CD14-positive monocyte (primary cell): ENCODE measurements at regions of chr10 and their contacts with region 1.

Region 1: DNA sequence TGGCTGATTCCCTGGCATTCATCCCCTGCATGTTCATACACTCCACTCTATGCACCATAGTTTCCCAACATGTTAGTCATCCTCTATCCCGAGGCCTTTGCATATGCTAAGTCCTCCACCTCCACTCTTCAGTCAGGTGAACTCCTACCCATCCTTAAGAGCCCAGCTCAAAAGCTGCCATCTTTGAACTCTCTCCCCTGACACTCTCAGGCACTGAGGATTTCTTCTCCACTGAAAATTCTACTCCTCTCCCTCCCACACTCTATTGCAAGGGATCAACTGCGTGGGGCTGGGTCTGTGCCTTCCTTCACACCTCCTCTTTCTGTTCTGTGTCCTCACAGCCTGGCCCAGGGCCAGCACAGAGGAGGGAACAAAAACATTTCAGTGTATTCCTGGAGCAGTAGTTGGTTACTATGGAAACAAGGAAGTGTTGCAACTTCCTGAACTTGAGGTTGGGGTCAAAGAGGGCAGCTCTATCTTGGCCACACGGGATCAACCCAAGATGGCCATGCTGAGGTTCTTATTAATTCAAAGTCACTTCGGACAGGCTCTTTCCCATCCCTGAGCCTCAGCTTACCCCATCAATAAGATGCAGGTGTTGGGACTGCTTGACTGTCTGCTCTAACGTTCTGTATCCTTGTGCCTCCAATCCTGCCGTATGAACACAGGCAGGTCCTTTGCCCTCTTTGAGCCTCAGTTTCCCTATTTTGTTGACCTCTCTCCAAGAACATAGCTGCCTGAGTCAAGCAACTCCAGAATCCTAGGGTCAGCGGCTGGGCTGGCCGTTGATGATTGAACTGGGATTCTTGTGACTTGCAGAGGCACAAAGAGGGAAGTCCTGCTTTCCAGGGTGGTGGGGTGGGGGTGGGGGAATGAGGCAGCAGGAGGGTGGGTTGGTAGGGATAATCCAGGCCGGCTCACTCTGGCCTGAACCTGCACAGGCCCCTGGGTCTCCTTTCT is 15.5 kb downstream of the ZMIZ1 start:
- DNase-seq: peak; percentile 98 to 99 (median 98)
- H3K4me3 ChIP-seq: peak overlapping the region; percentile 17 to 60 (median 28)
- H3K4me3 Mint-ChIP-seq: peak overlapping the region; percentile 84 to 98
- H3K27ac ChIP-seq: peak overlapping the region; percentile 88 to 96
- H3K27ac Mint-ChIP-seq: peak overlapping the region; percentile 97 to 100 (median 100)
- H3K4me1 ChIP-seq: peaks cover 85 to 91% of the 10 kb centered on the region in 2 donors
- H3K4me1 Mint-ChIP-seq: peaks cover 93% of the 10 kb centered on the region
- H3K27me3 ChIP-seq: no peaks in the 10 kb centered on the region
- H3K27me3 Mint-ChIP-seq: peaks cover 0 to 8% (median 2%) of the 10 kb centered on the region in 3 donors
- CTCF ChIP-seq: no peak

Region 2: DNA sequence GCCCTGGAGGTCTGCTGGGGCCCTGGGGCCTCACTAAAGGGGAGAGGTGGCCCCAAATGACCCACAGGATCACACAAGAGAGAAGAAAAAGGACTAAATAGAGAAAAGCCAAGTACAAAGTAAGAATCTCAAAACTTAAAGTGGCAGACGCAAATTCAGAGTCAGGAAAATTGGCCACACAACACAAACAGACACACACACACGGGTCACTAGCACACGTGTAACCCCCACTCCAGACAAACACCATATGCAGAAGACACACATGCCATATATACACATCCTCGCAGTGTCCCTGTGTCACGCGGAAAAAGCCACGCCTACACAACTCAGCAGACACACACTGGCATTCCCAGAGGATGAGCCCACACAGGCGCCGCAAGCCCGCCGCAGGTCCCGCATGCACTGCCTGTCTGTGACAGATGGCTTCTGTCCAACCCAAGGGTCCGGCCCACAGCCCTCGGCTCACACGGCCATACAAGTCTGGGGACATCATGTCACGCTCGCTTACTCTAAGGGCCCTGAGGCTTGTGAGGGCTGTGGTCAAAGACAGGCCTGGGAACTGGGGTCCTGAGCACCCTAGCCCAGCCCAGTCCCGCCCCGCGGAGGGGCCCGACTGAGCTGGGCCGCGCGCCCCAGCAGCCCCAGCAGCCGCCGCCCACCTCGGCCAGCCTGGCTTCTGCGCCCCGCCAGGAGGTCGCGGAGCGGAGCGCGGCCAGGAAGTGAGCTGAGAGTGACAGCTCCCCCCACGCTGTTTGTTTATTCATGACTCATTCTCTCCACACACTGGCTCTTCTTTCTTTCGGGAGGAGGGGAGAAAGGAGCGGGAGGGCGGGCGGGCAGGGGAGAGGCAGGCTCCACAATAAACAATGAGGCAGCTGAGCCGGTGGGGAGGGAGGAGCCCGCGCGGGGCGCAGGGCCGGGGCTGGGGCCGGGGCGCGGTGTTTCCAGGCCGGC is 111.1 kb before region 1 on chr10:
- intact Hi-C with region 1: loop called (anchors 5 to 10 kb)
- DNase-seq: peak; percentile 87 to 90 (median 89)
- H3K4me3 ChIP-seq: peak overlapping the region; percentile 32 to 73 (median 42)
- H3K4me3 Mint-ChIP-seq: peak overlapping the region; percentile 67 to 70
- H3K27ac ChIP-seq: peak overlapping the region; percentile 27 to 92
- H3K27ac Mint-ChIP-seq: peak overlapping the region in 6 of 7 donors; percentile 61 to 99 (median 82)
- H3K4me1 ChIP-seq: peaks cover 27 to 33% of the 10 kb centered on the region in 2 donors
- H3K4me1 Mint-ChIP-seq: peaks cover 42% of the 10 kb centered on the region
- H3K27me3 ChIP-seq: no peaks in the 10 kb centered on the region
- H3K27me3 Mint-ChIP-seq: peaks cover 5 to 21% (median 6%) of the 10 kb centered on the region in 3 donors
- CTCF ChIP-seq: no peak

Region 3: GRCh38 chr10:79073784-79074432 is 10.4 kb before region 1 on chr10:
- intact Hi-C with region 1: loop called in 1 of 2 experiments (anchors 2 kb)
- DNase-seq: no peak
- H3K4me3 ChIP-seq: peak overlapping the region in 1 of 3 experiments; percentile 99
- H3K4me3 Mint-ChIP-seq: peak overlapping the region; percentile 48 to 56
- H3K27ac ChIP-seq: no peak overlapping the region
- H3K27ac Mint-ChIP-seq: peak overlapping the region in 5 of 7 donors; percentile 9 to 82 (median 37)
- H3K4me1 ChIP-seq: peaks cover 81 to 82% of the 10 kb centered on the region in 2 donors
- H3K4me1 Mint-ChIP-seq: peaks cover 78% of the 10 kb centered on the region
- H3K27me3 ChIP-seq: no peaks in the 10 kb centered on the region
- H3K27me3 Mint-ChIP-seq: peaks cover 0 to 2% (median 0%) of the 10 kb centered on the region in 3 donors
- CTCF ChIP-seq: no peak

Region 4: GRCh38 chr10:79149662-79150443 is 65.6 kb after region 1 on chr10:
- intact Hi-C with region 1: loop called in 1 of 2 experiments (anchors 5 kb)
- DNase-seq: peak; percentile 64 to 84 (median 78)
- H3K4me3 ChIP-seq: peak overlapping the region in 1 of 3 experiments; percentile 50
- H3K4me3 Mint-ChIP-seq: peak overlapping the region; percentile 20 to 75
- H3K27ac ChIP-seq: peak overlapping the region; percentile 85 to 95
- H3K27ac Mint-ChIP-seq: peak overlapping the region; percentile 95 to 98 (median 98)
- H3K4me1 ChIP-seq: peaks cover 85 to 98% of the 10 kb centered on the region in 2 donors
- H3K4me1 Mint-ChIP-seq: peaks cover 90% of the 10 kb centered on the region
- H3K27me3 ChIP-seq: no peaks in the 10 kb centered on the region
- H3K27me3 Mint-ChIP-seq: peaks cover 0 to 2% (median 0%) of the 10 kb centered on the region in 3 donors
- CTCF ChIP-seq: no peak